GM23248 (cell line): ENCODE measurements at regions of chr2 and their contacts with region 1.

Region 1: GRCh38 chr2:198309673-198310280 is 505.4 kb downstream of the PLCL1 start:
- DNase-seq: peak; percentile 64
- H3K4me3 ChIP-seq: no peak overlapping the region
- H3K27ac ChIP-seq: no peak overlapping the region
- H3K4me1 ChIP-seq: no peaks in the 10 kb centered on the region
- H3K27me3 ChIP-seq: no peaks in the 10 kb centered on the region

Region 2: GRCh38 chr2:198394208-198394607 is 84.4 kb after region 1 on chr2:
- in situ Hi-C with region 1: no loop called
- DNase-seq: no peak
- H3K4me3 ChIP-seq: no peak overlapping the region
- H3K27ac ChIP-seq: no peak overlapping the region
- H3K4me1 ChIP-seq: no peaks in the 10 kb centered on the region
- H3K27me3 ChIP-seq: no peaks in the 10 kb centered on the region

Region 3: DNA sequence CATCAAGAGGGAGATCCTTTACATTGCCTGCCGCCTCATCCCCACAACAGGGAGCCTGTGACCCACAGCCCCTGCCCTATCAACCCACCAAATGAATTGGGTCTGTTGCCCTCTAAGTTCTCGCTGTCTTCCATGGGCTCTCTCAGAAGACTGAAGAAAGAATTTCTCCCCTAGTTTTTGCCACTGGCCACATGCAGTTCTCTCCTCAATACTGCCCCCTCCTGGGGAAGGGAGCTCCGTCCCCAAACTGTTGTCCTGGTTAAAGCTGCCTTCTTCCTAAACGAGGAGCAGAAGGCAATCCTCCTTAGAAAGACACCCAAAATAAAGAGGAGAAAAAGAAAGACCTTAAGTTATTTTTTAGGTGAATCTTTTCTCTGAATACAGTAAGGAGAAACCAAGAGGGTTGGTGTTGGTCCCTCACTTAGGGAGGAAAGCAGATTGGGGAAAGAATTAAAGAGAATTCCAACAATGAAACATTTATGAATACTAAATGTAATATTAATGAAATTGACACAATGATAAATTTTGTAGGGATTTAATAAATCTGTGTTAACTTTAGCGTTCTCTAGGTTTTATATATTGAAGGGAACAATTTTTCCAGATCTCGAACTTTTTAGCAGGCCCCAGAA is 1179.1 kb after region 1 on chr2:
- in situ Hi-C with region 1: loop called (anchors 10 kb)
- DNase-seq: peak; percentile 70
- H3K4me3 ChIP-seq: no peak overlapping the region
- H3K27ac ChIP-seq: no peak overlapping the region
- H3K4me1 ChIP-seq: no peaks in the 10 kb centered on the region
- H3K27me3 ChIP-seq: no peaks in the 10 kb centered on the region; the same call in 1 of the 2 replicates

Region 4: GRCh38 chr2:199739413-199740110 is 1429.8 kb after region 1 on chr2:
- in situ Hi-C with region 1: loop called (anchors 25 kb)
- DNase-seq: peak; percentile 66
- H3K4me3 ChIP-seq: no peak overlapping the region
- H3K27ac ChIP-seq: no peak overlapping the region
- H3K4me1 ChIP-seq: peaks cover 12% of the 10 kb centered on the region
- H3K27me3 ChIP-seq: no peaks in the 10 kb centered on the region; the same call in none of the 2 replicates